Left ventricle myocardium superior (tissue), 1 donor: ENCODE measurements at regions of chr4 and their contacts with region 1.

Region 1: GRCh38 chr4:11954093-11954492 is 525.4 kb upstream of the HS3ST1 start:
- DNase-seq: no peak
- ATAC-seq: no peak

Region 2: GRCh38 chr4:11805842-11806241 is 148.3 kb before region 1 on chr4:
- intact Hi-C with region 1: loop called (anchors 10 kb)
- DNase-seq: no peak
- ATAC-seq: peak; percentile 77